Naive thymus-derived CD8-positive, alpha-beta T cell (primary cell): ENCODE measurements at regions of chr3 and their contacts with region 1.

Region 1: GRCh38 chr3:195549931-195550519 is 6.9 kb upstream of the PPP1R2 start:
- DNase-seq: peak; percentile 65 to 95 (median 90)
- ATAC-seq: peak; percentile 84 to 87
- H3K4me3 Mint-ChIP-seq: peak overlapping the region; percentile 73 to 95 (median 86)
- H3K27ac Mint-ChIP-seq: peak overlapping the region; percentile 89 to 100 (median 98)
- H3K4me1 Mint-ChIP-seq: peaks cover 38 to 90% (median 87%) of the 10 kb centered on the region in 4 donors
- H3K27me3 Mint-ChIP-seq: no peaks in the 10 kb centered on the region

Region 2: GRCh38 chr3:195475614-195476013 is 74.4 kb before region 1 on chr3:
- POLR2A ChIA-PET with region 1: no interaction called
- DNase-seq: no peak
- ATAC-seq: no peak
- H3K4me3 Mint-ChIP-seq: no peak overlapping the region
- H3K27ac Mint-ChIP-seq: no peak overlapping the region
- H3K4me1 Mint-ChIP-seq: no peaks in the 10 kb centered on the region
- H3K27me3 Mint-ChIP-seq: peaks cover 0 to 10% (median 5%) of the 10 kb centered on the region in 5 donors

Region 3: GRCh38 chr3:195522254-195523023 is 27.6 kb before region 1 on chr3:
- POLR2A ChIA-PET with region 1: interaction called, 21 read pairs
- DNase-seq: peak in 4 of 10 donors; percentile 28 to 59 (median 58)
- ATAC-seq: no peak
- H3K4me3 Mint-ChIP-seq: peak overlapping the region in 5 of 10 donors; percentile 5 to 11 (median 7)
- H3K27ac Mint-ChIP-seq: peak overlapping the region; percentile 32 to 84 (median 66)
- H3K4me1 Mint-ChIP-seq: peaks cover 13 to 56% (median 46%) of the 10 kb centered on the region in 4 donors
- H3K27me3 Mint-ChIP-seq: no peaks in the 10 kb centered on the region

Region 4: DNA sequence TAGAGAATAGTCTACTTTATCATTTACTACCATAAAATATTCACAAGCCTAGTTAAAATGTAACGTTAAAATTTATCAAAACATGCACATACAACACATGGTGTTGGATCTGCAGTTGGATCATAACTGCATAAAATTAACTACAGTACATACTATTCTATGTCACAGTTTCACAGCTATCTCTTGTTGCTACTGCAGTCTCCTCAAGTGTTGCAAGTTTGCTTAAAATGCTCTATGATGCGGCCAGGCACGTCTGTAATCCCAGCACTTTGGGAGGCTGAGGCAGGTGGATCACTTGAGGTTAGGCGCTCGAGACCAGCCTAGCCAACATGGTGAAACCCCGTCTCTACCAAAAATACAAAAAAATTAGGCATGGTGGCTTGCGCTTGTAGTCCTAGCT is 17.2 kb before region 1 on chr3:
- POLR2A ChIA-PET with region 1: interaction called, 119 read pairs
- DNase-seq: no peak
- ATAC-seq: peak in 1 of 2 donors; percentile 37
- H3K4me3 Mint-ChIP-seq: peak overlapping the region; percentile 11 to 78 (median 58)
- H3K27ac Mint-ChIP-seq: peak overlapping the region in 9 of 10 donors; percentile 3 to 72 (median 59)
- H3K4me1 Mint-ChIP-seq: peaks cover 29 to 89% (median 83%) of the 10 kb centered on the region in 4 donors
- H3K27me3 Mint-ChIP-seq: no peaks in the 10 kb centered on the region

Region 5: GRCh38 chr3:195583831-195584542 is 34.0 kb after region 1 on chr3 and contains the start of gene APOD:
- POLR2A ChIA-PET with region 1: interaction called, 10 read pairs
- DNase-seq: no peak
- ATAC-seq: no peak
- H3K4me3 Mint-ChIP-seq: no peak within 1 kb of the TSS
- H3K27ac Mint-ChIP-seq: peak within 1 kb of the TSS in 2 of 10 donors; percentile 6 to 56
- H3K4me1 Mint-ChIP-seq: peaks cover 0 to 7% (median 2%) of the 10 kb centered on the region in 4 donors
- H3K27me3 Mint-ChIP-seq: peaks cover 0 to 2% (median 0%) of the 10 kb centered on the region in 5 donors
- polyA plus RNA-seq, gene APOD: not detected

Region 6: DNA sequence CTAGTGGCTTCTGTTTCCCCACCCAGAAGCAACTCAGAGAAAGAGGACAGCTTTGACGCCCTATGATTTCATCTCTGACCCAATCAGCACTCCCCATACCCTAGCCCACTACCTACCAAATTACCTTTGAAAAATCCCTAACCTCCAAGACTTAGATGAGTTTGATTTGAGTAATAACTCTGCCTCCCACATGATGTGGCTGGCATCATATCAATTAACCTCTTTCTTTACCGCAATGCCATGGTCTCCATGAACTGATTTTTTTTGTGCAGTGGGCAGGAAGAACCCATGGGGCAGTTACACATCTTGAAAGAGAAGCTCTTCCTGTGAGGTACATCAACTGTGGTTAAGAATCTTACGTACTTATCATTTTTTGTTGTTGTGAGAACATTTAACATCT is 59.2 kb after region 1 on chr3:
- POLR2A ChIA-PET with region 1: interaction called, 12 read pairs
- DNase-seq: peak in 8 of 10 donors; percentile 51 to 88 (median 72)
- ATAC-seq: peak; percentile 90 to 96
- H3K4me3 Mint-ChIP-seq: peak overlapping the region; percentile 12 to 75 (median 65)
- H3K27ac Mint-ChIP-seq: peak overlapping the region; percentile 71 to 96 (median 89)
- H3K4me1 Mint-ChIP-seq: peaks cover 23 to 62% (median 45%) of the 10 kb centered on the region in 4 donors
- H3K27me3 Mint-ChIP-seq: no peaks in the 10 kb centered on the region

Region 7: DNA sequence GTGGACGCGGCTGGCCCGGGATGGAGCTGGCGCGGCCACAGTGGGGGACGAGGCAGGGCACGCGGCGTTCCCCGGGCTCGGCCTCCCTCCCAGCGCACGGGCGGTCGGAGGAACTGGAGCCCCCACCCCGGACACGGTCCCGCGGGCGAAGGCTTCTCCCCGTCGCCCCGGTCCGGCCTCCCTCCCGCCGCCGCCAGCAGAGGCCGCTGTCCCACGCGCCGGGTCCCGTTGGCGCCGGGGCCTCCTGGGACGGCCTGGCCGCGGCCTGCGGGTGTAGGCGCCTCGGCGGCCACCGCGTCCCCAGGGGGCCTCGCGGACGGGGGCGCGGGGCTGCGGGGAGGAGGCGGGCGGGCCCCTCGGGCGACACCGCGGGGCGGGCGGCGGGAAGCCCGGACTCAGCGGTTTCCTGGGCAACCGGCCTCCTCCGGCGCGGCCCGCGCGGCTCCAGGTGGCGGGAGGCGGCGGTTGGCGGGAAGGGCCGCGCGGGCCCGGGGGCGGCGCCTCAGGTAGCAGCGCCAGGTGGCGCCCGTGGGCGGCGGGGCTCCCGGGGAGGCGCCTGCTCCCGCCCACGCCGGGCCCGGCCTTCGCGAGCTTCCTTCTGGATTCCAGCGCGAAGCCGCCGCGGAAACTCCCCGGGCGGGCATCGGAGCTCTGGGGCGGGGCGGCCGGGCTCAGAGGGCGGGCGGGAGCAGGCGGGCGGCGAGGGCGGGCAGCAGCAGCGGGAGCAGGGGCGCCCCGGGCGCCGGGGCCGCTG is 1452.9 kb after region 1 on chr3:
- POLR2A ChIA-PET with region 1: no interaction called
- DNase-seq: peak; percentile 61 to 85 (median 78)
- ATAC-seq: peak; percentile 83 to 85
- H3K4me3 Mint-ChIP-seq: peak overlapping the region in 1 of 10 donors; percentile 75
- H3K27ac Mint-ChIP-seq: peak overlapping the region in 1 of 10 donors; percentile 59
- H3K4me1 Mint-ChIP-seq: peaks cover 4 to 17% (median 10%) of the 10 kb centered on the region in 4 donors
- H3K27me3 Mint-ChIP-seq: peaks cover 0 to 2% (median 0%) of the 10 kb centered on the region in 5 donors